Head of caudate nucleus (tissue), 42 donors: ENCODE measurements at regions of chr11 and their contacts with region 1.

Region 1: DNA sequence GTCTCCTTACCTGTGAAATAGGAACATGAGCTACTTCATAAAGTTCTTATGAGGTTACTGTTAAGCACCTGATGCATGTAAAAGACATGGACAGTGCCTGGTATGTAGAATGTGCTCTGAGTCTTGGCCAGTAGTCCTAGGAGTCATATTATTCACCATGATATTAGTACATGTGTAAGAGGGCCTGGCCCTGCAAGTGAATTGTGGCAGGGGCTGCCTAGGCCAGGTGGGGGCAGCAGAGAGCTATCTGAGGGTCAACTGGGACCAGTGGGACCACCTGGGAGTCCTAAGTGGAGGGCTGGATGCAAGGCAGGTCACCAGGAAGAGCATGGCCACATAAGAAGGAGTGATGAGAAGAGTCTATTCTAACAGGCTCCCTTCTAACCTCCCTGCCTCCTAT is 529.5 kb downstream of the SOX6 start:
- DNase-seq: peak in 41 of 42 donors; percentile 12 to 82 (median 56)

Region 2: GRCh38 chr11:15730617-15731385 is 96.0 kb before region 1 on chr11:
- intact Hi-C with region 1: no loop called
- DNase-seq: no peak

Region 3: DNA sequence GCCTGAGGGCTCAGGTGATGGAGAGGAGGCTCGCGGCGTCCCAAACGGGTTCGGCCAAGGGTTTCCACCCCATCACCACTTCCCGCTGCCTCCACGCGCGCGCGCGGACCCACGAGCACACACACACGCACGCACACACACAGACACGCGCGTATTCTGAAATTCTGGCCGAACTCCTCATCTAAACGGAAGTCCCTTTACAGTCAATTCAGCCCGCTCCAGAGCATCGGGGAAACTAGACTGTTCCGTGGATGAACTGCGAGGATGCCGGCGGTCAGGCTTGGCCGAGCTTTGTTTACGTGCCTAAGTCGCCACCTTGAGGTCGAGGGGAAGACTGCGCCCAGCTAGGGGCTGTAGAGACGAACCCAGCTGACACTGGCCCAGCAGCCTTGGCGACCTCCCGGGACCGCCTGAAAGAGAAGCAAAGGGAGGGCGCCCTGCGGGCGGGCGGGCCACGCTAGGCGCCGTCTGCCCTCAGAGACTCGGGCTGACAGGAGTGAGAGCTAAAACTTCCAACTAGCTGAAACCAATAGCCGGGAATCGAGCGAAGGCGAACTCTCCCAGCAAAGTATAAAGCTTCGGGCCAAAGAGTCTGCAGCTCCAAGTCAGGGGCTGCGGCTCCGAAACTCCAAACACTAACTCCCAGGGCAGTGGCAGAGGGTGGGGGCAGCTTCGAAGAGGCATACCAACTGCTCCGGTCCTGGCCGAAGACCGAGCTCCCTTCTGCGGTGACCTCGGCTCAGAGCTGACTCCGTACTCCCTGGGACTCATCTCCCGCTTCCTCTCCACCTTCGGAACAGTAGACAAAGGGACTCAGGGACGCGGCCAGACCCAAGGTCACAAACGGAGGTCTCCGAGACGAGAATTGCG is 786.9 kb after region 1 on chr11:
- intact Hi-C with region 1: loop called (anchors 5 kb)
- DNase-seq: peak; percentile 81 to 95 (median 90)